Spleen (tissue), 13 donors: ENCODE measurements at regions of chr18 and their contacts with region 1.

Region 1: GRCh38 chr18:12391618-12392165 is 14.7 kb upstream of the AFG3L2 start:
- DNase-seq: peak; percentile 32
- H3K4me3 ChIP-seq: no peak overlapping the region
- H3K27ac ChIP-seq: no peak overlapping the region
- H3K4me1 ChIP-seq: no peaks in the 10 kb centered on the region
- H3K27me3 ChIP-seq: peaks cover 0 to 18% (median 0%) of the 10 kb centered on the region in 7 donors
- CTCF ChIP-seq: peak; percentile 61 to 91 (median 80)
- POLR2A ChIP-seq: no peak

Region 2: DNA sequence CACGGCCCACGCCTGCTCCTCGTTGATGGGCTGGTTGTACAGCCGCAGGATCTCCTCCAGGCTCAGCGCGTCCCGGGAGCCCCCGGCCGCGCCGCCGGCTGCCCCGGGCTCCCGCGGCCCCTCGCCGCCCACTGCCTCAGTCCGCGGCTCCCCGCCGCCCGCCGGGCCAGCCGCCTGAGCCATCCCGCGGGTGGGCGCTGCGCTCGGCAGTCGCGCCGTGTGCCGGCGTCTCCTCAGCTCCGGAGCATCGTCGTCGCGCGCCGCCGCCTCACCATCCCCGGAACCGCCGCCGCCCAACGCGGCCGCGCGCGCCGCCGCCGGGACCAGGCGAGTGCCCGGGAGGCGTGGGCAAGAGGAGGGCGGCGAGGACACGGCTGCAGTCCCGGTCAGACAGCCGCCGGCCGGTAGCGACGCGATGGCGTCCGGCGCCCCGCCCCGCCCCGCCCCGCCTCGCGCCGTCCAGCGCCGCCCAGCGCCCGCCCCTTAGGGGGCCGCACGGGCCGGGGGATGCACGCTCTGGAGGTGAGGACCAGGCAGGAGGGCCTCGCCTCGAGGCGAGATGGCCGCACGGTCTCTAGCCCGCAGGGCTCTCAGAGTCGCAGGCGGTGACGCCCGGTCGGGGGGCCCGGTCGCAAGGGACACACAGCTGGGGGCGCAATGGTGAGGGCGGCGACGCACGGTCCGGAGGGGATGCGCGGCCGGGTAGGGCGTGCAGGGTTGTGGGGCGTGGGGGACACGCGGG is 266.2 kb after region 1 on chr18 and contains the start of gene SPIRE1:
- intact Hi-C with region 1: loop called (anchors 2 kb)
- DNase-seq: peak; percentile 88
- H3K4me3 ChIP-seq: peak within 1 kb of the TSS; percentile 54 to 96 (median 80)
- H3K27ac ChIP-seq: peak within 1 kb of the TSS; percentile 38 to 91 (median 86)
- H3K4me1 ChIP-seq: peaks cover 0 to 46% (median 18%) of the 10 kb centered on the region in 6 donors
- H3K27me3 ChIP-seq: peaks cover 0 to 38% (median 0%) of the 10 kb centered on the region in 7 donors
- CTCF ChIP-seq: no peak
- POLR2A ChIP-seq: no peak
- total RNA-seq, gene SPIRE1: 9.2 to 19.4 (median 13.7) TPM

Region 3: GRCh38 chr18:12803096-12803936 is 411.6 kb after region 1 on chr18:
- intact Hi-C with region 1: no loop called
- DNase-seq: no peak
- H3K4me3 ChIP-seq: no peak overlapping the region
- H3K27ac ChIP-seq: no peak overlapping the region
- H3K4me1 ChIP-seq: peaks cover 0 to 6% (median 0%) of the 10 kb centered on the region in 6 donors
- H3K27me3 ChIP-seq: no peaks in the 10 kb centered on the region
- CTCF ChIP-seq: no peak
- POLR2A ChIP-seq: no peak